Activated naive CD4-positive, alpha-beta T cell treated with anti-CD3 and anti-CD28 coated beads for 36 hours (primary cell): ENCODE measurements at regions of chr13 and their contacts with region 1.

Region 1: GRCh38 chr13:71935166-71935840 is 68.3 kb upstream of the DACH1 start:
- DNase-seq: no peak
- H3K4me3 Mint-ChIP-seq: no peak overlapping the region
- H3K27ac Mint-ChIP-seq: no peak overlapping the region
- H3K4me1 Mint-ChIP-seq: no peaks in the 10 kb centered on the region
- H3K27me3 Mint-ChIP-seq: no peaks in the 10 kb centered on the region

Region 2: GRCh38 chr13:71454509-71454908 is 480.8 kb before region 1 on chr13:
- CTCF ChIA-PET with region 1: no interaction called
- intact Hi-C with region 1: loop called (anchors 10 kb)
- DNase-seq: no peak
- H3K4me3 Mint-ChIP-seq: no peak overlapping the region
- H3K27ac Mint-ChIP-seq: no peak overlapping the region
- H3K4me1 Mint-ChIP-seq: no peaks in the 10 kb centered on the region
- H3K27me3 Mint-ChIP-seq: no peaks in the 10 kb centered on the region

Region 3: GRCh38 chr13:71828117-71828516 is 107.2 kb before region 1 on chr13:
- CTCF ChIA-PET with region 1: no interaction called
- intact Hi-C with region 1: no loop called
- DNase-seq: no peak
- H3K4me3 Mint-ChIP-seq: no peak overlapping the region
- H3K27ac Mint-ChIP-seq: no peak overlapping the region
- H3K4me1 Mint-ChIP-seq: peaks cover 11% of the 10 kb centered on the region
- H3K27me3 Mint-ChIP-seq: peaks cover 1% of the 10 kb centered on the region

Region 4: GRCh38 chr13:71967990-71968389 is 32.7 kb after region 1 on chr13:
- CTCF ChIA-PET with region 1: no interaction called
- intact Hi-C with region 1: no loop called
- DNase-seq: no peak
- H3K4me3 Mint-ChIP-seq: no peak overlapping the region
- H3K27ac Mint-ChIP-seq: no peak overlapping the region
- H3K4me1 Mint-ChIP-seq: peaks cover 3% of the 10 kb centered on the region
- H3K27me3 Mint-ChIP-seq: no peaks in the 10 kb centered on the region

Region 5: DNA sequence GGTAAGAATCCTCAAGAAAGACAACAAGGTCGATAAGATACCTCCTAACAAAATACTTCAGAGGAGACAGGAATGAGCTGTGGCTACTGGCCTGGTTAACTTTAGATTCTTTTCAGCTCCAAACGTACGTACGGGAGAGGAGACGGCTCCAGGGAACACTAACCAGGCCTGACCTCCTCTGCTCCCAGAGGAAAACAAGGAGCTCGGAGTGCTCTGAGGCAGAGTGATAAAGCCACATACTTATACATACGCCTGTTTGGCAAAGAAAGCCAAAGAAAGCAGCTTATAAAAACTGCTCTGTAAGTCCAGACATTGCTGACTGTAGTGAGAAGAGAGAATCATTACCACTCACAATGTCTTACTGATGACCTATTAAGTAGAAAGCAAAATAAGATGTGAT is 528.3 kb after region 1 on chr13:
- CTCF ChIA-PET with region 1: no interaction called
- intact Hi-C with region 1: no loop called
- DNase-seq: no peak
- H3K4me3 Mint-ChIP-seq: no peak overlapping the region
- H3K27ac Mint-ChIP-seq: no peak overlapping the region
- H3K4me1 Mint-ChIP-seq: no peaks in the 10 kb centered on the region
- H3K27me3 Mint-ChIP-seq: no peaks in the 10 kb centered on the region